Activated CD4-positive, alpha-beta memory T cell treated with anti-CD3 and anti-CD28 coated beads, Interleukin-2, amount 10 ng/mL, durations not matched to agents 7 days and 5 days (primary cell): ENCODE measurements at regions of chr3 and their contacts with region 1.

Region 1: DNA sequence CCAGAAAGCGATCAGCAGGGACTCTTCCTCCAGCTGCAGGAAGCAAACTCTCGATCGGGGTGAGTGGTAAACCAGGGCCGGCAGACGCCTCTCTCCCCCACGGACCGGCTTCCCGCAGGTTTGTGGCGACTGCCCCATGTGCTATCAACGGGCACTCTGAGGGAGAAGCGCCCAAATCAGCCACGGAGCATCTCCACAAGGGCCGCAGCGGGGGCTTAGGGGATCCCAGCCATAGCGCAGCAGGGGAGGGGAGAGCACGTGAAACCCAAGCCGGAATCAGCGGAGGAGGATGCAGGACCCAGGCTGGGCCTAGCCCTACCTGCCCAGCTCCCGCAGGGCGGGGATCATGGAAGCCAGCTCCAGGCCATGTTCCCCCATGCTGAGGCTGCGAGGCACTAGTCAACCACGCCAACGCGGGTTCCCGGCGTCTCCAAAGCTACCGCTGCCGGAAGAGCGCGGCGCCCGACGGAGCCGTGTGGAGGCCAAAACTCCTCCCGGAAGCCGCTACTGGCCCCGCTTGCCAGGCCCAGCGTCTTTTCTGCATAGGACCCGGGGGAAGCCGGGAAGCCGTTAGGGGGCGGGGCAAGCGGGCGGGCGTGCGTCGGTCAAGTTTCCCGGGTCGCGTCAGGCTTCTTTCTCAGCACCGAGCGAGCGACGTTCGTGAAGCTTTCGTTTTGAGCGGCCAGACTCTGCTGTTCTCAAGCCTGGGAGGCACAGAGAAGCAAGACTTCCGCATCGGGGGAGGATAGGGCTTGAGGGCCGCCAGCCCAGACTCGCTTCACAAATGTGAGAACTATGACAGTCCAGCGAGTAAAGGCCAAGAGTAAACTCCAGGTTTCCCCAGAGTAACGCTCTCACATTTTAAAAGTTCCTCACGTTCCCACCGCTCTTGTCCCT is at the start of gene ATR:
- DNase-seq: peak; percentile 98
- H3K4me3 Mint-ChIP-seq: peak within 1 kb of the TSS; percentile 98
- H3K27ac Mint-ChIP-seq: peak within 1 kb of the TSS; percentile 95
- H3K4me1 Mint-ChIP-seq: peaks cover 45% of the 10 kb centered on the region
- H3K27me3 Mint-ChIP-seq: peaks cover 11% of the 10 kb centered on the region
- total RNA-seq, gene ATR: 24.5 to 24.7 TPM

Region 2: DNA sequence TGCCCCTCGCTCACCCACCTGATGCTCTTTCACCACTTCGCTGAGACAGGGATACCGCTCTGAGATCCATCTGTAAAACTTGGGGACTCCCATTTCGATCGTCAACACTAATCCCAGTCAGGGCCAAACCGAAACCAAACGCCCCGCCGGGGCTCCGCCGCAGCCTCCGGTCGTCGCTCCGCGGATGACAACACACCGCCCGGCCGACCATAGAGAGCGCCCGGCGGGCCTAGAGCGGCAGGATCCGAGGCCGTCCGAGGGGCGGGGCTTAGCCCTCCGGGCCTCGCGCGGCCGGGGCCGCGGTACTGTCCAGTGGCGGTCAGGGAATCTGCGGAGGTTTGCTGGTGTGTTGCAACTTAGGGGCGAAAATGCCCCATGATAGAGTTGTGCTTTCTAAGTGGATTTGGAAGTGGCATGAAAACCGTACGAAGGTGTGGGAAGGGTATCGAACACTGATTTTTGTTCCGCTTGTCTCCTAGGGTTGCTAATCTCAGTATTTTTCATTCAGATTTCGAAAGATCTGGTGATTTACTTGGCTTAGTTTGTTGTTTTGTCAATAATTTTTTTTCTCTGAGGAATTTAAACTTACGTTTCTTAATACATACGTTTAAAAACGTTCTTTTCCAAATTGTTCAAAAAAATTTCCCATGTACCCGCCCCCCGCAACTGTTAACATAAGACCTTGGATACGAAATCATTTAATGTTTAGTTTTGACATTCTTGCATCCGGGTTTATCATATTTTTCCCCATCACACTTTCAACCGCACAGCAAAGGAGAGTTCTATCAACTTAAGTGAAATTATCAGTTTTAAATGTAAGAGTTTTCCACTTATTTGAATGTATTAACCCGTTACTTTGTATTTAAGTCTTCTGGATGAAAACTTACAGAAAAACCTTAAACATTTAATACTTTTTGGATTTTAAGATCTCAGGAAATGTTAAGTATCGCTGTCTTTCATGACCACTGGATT is 130.4 kb before region 1 on chr3 and contains the start of gene XRN1:
- CTCF ChIA-PET with region 1: no interaction called
- POLR2A ChIA-PET with region 1: interaction called, 40 read pairs
- DNase-seq: peak; percentile 96
- H3K4me3 Mint-ChIP-seq: peak within 1 kb of the TSS; percentile 90
- H3K27ac Mint-ChIP-seq: peak within 1 kb of the TSS; percentile 97
- H3K4me1 Mint-ChIP-seq: peaks cover 26% of the 10 kb centered on the region
- H3K27me3 Mint-ChIP-seq: no peaks in the 10 kb centered on the region
- total RNA-seq, gene XRN1: 100 to 103 TPM

Region 3: DNA sequence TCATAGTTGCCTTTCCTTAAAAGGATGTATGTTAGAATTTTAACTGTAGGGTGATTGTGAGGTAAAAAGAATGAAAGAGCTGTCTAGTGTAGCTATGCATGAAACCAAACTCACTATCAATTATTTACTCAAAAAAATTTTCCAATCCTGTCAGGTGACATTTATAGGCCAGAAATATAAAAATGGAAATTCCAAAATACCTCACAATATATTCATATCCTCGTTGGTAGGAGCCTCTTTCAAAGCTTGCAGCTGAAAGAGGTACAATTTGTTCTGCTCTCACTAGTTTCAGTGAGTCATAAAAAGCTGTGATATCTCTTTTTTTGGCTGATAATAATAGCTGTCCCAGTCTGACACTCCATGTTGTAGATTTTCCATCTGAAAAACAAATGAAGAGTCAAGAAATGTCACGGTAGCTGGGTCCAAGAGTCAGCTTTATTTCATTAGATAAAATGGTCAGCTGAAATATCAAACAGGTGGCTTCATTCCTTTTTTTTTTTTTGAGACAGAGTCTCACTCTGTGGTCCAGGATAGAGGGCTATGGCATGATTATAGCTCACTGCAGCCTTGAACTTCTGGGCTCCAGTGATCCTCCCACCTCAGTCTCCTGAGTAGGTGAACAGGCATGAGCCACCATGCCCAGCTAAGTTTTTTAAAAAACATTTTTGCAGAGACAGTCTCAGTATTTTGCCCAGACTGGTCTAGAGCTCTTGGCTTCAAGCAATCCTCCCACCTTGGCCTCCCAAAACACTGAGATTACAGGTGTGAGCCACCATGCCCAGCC is 80.0 kb before region 1 on chr3:
- CTCF ChIA-PET with region 1: no interaction called
- POLR2A ChIA-PET with region 1: no interaction called
- DNase-seq: no peak
- H3K4me3 Mint-ChIP-seq: no peak overlapping the region
- H3K27ac Mint-ChIP-seq: no peak overlapping the region
- H3K4me1 Mint-ChIP-seq: no peaks in the 10 kb centered on the region
- H3K27me3 Mint-ChIP-seq: no peaks in the 10 kb centered on the region

Region 4: DNA sequence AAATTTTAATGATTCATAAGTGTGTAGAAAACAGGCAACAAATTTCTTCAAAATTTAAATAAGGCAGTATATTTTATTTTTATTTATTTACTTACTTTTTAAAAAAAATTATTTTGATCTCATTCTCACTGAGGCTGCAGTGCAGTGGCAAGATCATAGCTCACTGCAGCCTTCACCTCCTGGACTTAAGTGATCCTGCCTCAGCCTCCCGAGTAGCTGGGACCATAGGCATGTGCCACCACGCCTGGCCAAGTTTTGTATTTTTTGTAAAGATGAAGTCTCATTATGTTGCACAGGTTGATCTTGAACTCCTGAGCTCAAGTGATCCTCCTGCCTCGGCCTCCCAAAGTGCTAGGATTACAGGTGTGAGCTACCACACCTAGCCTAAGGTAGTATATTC is 69.5 kb before region 1 on chr3:
- CTCF ChIA-PET with region 1: interaction called, 3 read pairs
- POLR2A ChIA-PET with region 1: interaction called, 13 read pairs
- DNase-seq: no peak
- H3K4me3 Mint-ChIP-seq: peak overlapping the region; percentile 78
- H3K27ac Mint-ChIP-seq: peak overlapping the region; percentile 90
- H3K4me1 Mint-ChIP-seq: peaks cover 15% of the 10 kb centered on the region
- H3K27me3 Mint-ChIP-seq: no peaks in the 10 kb centered on the region

Region 5: GRCh38 chr3:142568393-142569017 is 10.1 kb before region 1 on chr3:
- CTCF ChIA-PET with region 1: no interaction called
- POLR2A ChIA-PET with region 1: interaction called, 12 read pairs
- DNase-seq: no peak
- H3K4me3 Mint-ChIP-seq: no peak overlapping the region
- H3K27ac Mint-ChIP-seq: no peak overlapping the region
- H3K4me1 Mint-ChIP-seq: peaks cover 9% of the 10 kb centered on the region
- H3K27me3 Mint-ChIP-seq: no peaks in the 10 kb centered on the region

Region 6: GRCh38 chr3:142595951-142596725 is 17.6 kb after region 1 on chr3 and contains the start of gene PLS1:
- CTCF ChIA-PET with region 1: interaction called, 4 read pairs
- POLR2A ChIA-PET with region 1: interaction called, 97 read pairs
- DNase-seq: peak; percentile 88
- H3K4me3 Mint-ChIP-seq: peak within 1 kb of the TSS; percentile 93
- H3K27ac Mint-ChIP-seq: peak within 1 kb of the TSS; percentile 50
- H3K4me1 Mint-ChIP-seq: peaks cover 15% of the 10 kb centered on the region
- H3K27me3 Mint-ChIP-seq: peaks cover 2% of the 10 kb centered on the region
- total RNA-seq, gene PLS1: 3.1 to 3.6 TPM

Region 7: GRCh38 chr3:142723968-142724681 is 145.6 kb after region 1 on chr3 and contains the start of gene TRPC1:
- CTCF ChIA-PET with region 1: interaction called, 4 read pairs
- POLR2A ChIA-PET with region 1: interaction called, 16 read pairs
- DNase-seq: peak; percentile 85
- H3K4me3 Mint-ChIP-seq: peak within 1 kb of the TSS; percentile 81
- H3K27ac Mint-ChIP-seq: peak within 1 kb of the TSS; percentile 83
- H3K4me1 Mint-ChIP-seq: peaks cover 12% of the 10 kb centered on the region
- H3K27me3 Mint-ChIP-seq: peaks cover 53% of the 10 kb centered on the region
- total RNA-seq, gene TRPC1: 3.0 TPM